Aorta (tissue), 5 donors: ENCODE measurements at regions of chr15 and their contacts with region 1.

Region 1: GRCh38 chr15:100167884-100168375 is 173.8 kb downstream of the ADAMTS17 start:
- DNase-seq: no peak
- ATAC-seq: peak; percentile 71
- H3K4me3 ChIP-seq: no peak overlapping the region
- H3K27ac ChIP-seq: peak overlapping the region in 1 of 2 donors; percentile 38
- H3K4me1 ChIP-seq: no peaks in the 10 kb centered on the region
- H3K27me3 ChIP-seq: no peaks in the 10 kb centered on the region

Region 2: GRCh38 chr15:100241572-100242482 is 73.9 kb after region 1 on chr15:
- intact Hi-C with region 1: no loop called
- DNase-seq: peak in 1 of 2 donors; percentile 61
- ATAC-seq: peak; percentile 73
- H3K4me3 ChIP-seq: no peak overlapping the region
- H3K27ac ChIP-seq: peak overlapping the region in 1 of 2 donors; percentile 84
- H3K4me1 ChIP-seq: peaks cover 0 to 4% of the 10 kb centered on the region in 2 donors
- H3K27me3 ChIP-seq: no peaks in the 10 kb centered on the region

Region 3: GRCh38 chr15:100311154-100311625 is 143.3 kb after region 1 on chr15:
- intact Hi-C with region 1: loop called in 1 of 2 experiments (anchors 10 kb)
- DNase-seq: no peak
- ATAC-seq: peak; percentile 44
- H3K4me3 ChIP-seq: no peak overlapping the region
- H3K27ac ChIP-seq: no peak overlapping the region
- H3K4me1 ChIP-seq: peaks cover 0 to 4% of the 10 kb centered on the region in 2 donors
- H3K27me3 ChIP-seq: no peaks in the 10 kb centered on the region